Right ventricle myocardium inferior (tissue), 1 donor: ENCODE measurements at regions of chr14 and their contacts with region 1.

Region 1: DNA sequence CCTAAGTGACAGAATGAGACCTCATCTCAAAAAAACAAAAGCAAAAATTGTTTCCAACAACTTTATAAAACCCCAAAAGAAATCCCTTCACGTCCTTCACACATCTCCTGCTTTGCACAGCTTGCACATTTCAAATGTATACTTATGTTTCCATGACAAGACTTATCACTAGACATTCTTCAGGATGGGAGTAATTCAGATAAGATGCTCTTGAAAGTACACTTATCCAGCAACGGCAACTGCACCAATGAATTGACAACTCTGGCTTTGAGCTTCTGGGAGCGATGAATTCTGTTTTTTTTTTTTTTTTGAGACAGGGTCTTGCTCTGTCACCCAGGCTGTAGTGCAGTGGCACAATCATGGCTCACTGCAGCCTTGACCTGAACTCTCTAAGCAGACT is 30.8 kb upstream of the AKAP5 start:
- DNase-seq: no peak
- ATAC-seq: no peak

Region 2: GRCh38 chr14:64468451-64468850 is 33.9 kb after region 1 on chr14:
- intact Hi-C with region 1: no loop called
- DNase-seq: no peak
- ATAC-seq: no peak

Region 3: GRCh38 chr14:64478634-64479250 is 44.2 kb after region 1 on chr14:
- intact Hi-C with region 1: loop called (anchors 5 kb)
- DNase-seq: no peak
- ATAC-seq: no peak